Posterior cingulate gyrus (tissue), 11 donors: ENCODE measurements at regions of chr14 and their contacts with region 1.

Region 1: DNA sequence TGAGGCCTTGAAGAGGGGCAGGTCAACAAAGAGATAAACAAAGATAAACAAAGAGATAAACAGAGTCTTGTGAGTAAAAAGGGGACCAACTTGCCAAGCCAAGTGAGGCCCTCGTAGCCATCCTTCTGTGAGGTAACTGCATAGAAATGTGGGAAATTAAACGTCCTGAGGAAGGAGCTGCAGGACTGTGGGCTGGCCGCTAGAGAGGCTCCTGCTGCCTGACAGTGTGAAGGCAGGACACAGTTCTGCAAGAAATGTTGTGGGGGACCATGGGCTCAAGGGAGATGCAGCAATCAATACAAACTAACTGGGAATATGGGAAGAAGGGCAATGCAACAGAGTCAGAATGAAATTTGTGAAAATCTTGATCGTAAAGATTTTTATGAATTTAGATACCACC is 91.9 kb downstream of the SLC8A3 start:
- DNase-seq: peak in 7 of 10 donors; percentile 20 to 91 (median 59)

Region 2: DNA sequence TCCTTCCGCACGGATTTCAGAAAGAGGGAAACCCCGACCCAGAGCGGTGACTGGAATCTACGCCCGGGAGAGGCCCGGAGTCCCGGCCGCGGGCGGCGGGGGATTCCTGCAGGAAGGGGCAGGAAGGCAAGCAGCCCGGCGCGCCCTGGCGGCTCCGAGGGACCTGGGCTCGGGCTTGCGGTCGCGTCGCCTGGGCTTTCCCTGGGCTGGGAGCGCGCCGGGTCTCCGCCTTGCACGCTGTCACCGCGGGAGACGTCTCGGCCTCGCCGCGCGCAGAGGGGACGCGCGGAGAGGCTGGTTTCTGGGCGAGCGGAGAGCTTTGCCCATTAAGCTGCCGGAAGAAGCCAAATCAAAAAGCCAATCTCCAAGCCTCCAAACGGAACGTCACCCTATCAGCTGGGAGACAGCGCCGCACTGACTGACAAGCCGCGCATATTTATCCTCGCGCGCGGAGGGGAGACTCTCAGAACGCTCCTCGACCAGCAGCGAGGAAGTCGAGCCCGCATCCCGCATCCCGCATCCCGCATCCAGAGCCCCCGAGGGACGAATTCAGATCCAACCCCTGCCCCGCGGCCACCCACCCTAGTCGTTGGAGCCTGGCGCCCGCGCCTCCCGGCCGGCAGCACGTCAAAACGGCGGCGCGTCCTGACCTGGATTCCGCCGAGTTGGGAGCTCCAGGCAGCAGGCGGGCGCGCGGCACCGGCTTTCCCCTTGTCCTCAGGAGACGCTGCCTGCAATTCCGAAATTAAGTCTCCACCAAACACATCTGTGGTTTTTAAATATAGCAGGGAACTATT is 92.0 kb after region 1 on chr14 and contains the start of gene SLC8A3:
- intact Hi-C with region 1: loop called (anchors 5 kb)
- DNase-seq: peak; percentile 44 to 96 (median 78)

Region 3: GRCh38 chr14:70239802-70240201 is 142.9 kb after region 1 on chr14:
- intact Hi-C with region 1: no loop called
- DNase-seq: no peak